Heart left ventricle (tissue), 16 donors: ENCODE measurements at regions of chr5 and their contacts with region 1.

Region 1: DNA sequence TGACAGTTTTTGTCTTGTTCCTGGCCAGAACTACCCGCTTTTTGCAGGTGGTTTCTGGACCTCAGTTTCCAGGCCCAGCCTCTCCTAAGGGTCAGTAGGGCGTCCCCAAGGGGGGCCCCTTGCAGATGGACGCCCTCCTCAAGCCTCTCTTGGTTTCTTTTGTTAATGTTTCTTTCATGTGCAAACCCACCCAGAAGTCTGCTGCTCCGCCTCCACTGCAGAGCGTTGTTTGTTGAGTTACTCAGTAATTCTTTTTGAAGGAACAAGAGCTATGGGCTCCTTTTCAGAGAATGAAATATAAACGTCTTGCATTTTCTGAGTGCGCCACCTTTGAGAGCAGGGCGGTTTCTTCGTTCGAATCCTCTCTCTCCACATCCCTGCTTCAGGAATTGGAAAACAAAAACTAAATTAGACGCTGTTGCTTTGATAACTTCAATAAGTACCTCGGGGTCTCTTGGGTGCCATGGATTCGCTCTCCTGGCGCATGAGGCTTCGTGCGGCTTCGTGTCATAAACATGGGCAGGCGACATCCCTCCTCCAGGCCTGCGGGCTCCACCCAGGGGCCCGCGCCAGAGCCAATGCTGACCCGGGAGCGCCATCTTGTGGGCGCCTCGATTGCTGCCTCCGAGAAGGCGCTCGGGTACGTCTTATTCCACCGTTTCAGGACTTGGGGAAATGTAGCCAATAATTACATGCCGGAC is 38.3 kb upstream of the CKMT2 start:
- DNase-seq: peak; percentile 75 to 90 (median 81)
- ATAC-seq: peak; percentile 85 to 96 (median 94)
- H3K4me3 ChIP-seq: peak overlapping the region in 2 of 12 donors; percentile 16 to 17
- H3K27ac ChIP-seq: peak overlapping the region in 1 of 12 donors; percentile 14
- H3K4me1 ChIP-seq: peaks cover 0 to 19% (median 7%) of the 10 kb centered on the region in 12 donors
- H3K27me3 ChIP-seq: no peaks in the 10 kb centered on the region
- CTCF ChIP-seq: peak; percentile 85 to 99 (median 94)
- POLR2A ChIP-seq: no peak

Region 2: GRCh38 chr5:80487829-80488721 is 706.7 kb before region 1 on chr5 and contains the start of gene FAM151B:
- intact Hi-C with region 1: loop called in 2 of 10 experiments (anchors 5 to 10 kb)
- DNase-seq: peak; percentile 80 to 91 (median 88)
- ATAC-seq: peak; percentile 86 to 96 (median 95)
- H3K4me3 ChIP-seq: peak within 1 kb of the TSS; percentile 47 to 88 (median 70)
- H3K27ac ChIP-seq: peak within 1 kb of the TSS in 11 of 12 donors; percentile 12 to 86 (median 78)
- H3K4me1 ChIP-seq: peaks cover 0 to 18% (median 2%) of the 10 kb centered on the region in 12 donors
- H3K27me3 ChIP-seq: no peaks in the 10 kb centered on the region
- CTCF ChIP-seq: peak in 7 of 12 donors; percentile 3 to 48 (median 36)
- POLR2A ChIP-seq: peak in 1 of 2 donors; percentile 10
- total RNA-seq, gene FAM151B: 1.2 to 2.3 (median 1.7) TPM

Region 3: DNA sequence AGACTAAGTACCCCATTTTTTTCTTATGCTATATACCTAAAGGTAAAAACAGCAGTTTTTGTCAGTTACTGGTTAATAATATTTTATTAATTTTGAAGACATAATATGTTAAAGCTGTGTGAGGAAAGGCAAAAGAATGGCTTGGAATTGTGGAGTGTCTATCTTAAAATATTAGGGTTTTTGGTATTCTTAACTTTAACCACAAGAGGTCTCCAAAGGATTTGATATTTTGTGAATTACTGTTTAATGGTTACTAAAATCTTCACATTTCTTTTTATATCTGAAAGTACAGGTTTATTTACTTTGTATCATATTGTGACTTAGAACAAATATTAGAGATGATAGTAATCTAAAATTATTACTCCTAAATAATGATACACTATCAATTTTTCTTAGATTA is 508.0 kb before region 1 on chr5:
- intact Hi-C with region 1: loop called in 8 of 10 experiments (anchors 5 to 10 kb)
- DNase-seq: no peak
- ATAC-seq: no peak
- H3K4me3 ChIP-seq: no peak overlapping the region
- H3K27ac ChIP-seq: no peak overlapping the region
- H3K4me1 ChIP-seq: no peaks in the 10 kb centered on the region
- H3K27me3 ChIP-seq: no peaks in the 10 kb centered on the region
- CTCF ChIP-seq: peak in 11 of 12 donors; percentile 17 to 53 (median 33)
- POLR2A ChIP-seq: no peak

Region 4: DNA sequence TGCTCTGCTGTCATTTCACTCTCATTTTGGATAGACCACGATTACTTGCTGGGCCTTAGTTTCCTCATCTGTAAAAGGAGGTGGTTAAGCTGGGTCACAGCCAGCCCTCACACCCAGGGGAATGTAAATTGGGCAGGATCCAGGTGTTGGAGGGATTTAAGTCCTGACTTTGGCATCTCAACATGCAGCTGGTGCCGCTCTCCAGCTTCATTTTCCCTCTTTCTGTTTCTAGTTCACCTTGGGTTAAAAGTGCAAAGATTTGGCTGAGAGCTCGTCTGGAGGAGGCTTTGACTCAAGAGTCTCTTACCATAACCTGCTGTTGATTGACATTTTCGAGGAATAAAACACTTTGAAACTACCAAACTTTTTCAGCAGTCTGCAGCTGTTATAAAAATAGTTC is 395.7 kb before region 1 on chr5:
- intact Hi-C with region 1: loop called in 5 of 10 experiments (anchors 10 kb)
- DNase-seq: no peak
- ATAC-seq: peak in 1 of 4 donors; percentile 47
- H3K4me3 ChIP-seq: no peak overlapping the region
- H3K27ac ChIP-seq: no peak overlapping the region
- H3K4me1 ChIP-seq: peaks cover 0 to 5% (median 0%) of the 10 kb centered on the region in 12 donors
- H3K27me3 ChIP-seq: no peaks in the 10 kb centered on the region
- CTCF ChIP-seq: no peak
- POLR2A ChIP-seq: no peak

Region 5: DNA sequence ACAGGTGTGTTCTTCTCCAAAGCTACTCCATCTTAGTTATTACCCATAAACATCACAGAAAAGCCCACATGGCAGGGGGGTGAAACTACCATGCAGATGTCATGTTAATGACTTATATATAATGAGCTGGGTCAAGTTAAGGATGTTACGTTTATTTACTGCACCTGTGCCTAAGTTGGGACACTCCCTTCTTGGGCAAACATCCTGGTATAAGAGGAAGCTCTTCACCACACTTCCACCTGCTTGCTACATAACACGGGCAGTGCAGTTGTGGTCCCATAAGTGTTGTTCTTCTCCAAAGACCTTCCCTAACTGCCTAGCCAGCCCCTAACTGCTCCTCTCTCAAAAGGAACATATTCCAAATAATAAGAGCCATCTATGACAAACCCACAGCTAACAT is 97.3 kb after region 1 on chr5:
- intact Hi-C with region 1: loop called in 1 of 10 experiments (anchors 10 kb)
- DNase-seq: no peak
- ATAC-seq: no peak
- H3K4me3 ChIP-seq: no peak overlapping the region
- H3K27ac ChIP-seq: no peak overlapping the region
- H3K4me1 ChIP-seq: peaks cover 0 to 1% (median 0%) of the 10 kb centered on the region in 12 donors
- H3K27me3 ChIP-seq: no peaks in the 10 kb centered on the region
- CTCF ChIP-seq: no peak
- POLR2A ChIP-seq: no peak